ENCODE measurements at regions of chr10 and their contacts with region 1.

Region 1: DNA sequence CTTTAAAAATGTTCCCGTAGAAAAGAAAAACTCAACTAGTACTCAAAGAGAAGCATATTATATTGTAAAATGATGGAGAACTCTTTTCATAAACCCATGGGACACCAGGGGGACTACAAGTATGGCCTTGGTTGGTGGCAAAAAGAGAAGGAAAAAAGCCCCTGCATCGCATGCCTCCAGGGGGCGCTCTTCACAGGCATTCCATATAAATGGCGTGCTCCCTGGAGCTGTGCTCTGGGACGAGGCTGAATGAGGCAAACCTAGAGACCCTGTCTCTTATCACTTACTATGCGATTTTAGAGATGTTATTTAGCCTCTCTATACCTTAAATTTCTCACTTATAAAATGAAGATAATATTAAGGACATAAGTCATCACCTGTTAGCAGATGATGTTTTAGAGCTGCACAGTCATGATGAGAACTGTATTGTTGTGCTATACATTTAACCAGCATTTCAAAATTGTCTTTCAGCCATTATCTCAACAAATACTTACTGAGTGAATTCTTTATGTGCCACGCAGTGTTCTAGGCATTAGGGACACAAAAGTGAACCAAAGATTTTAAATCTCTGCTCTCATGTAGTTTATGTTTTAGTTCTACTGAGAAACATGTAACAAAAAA is 105.8 kb downstream of the ARHGAP21 start:
- DNase-seq: no peak
- H3K4me3 ChIP-seq: no peak overlapping the region
- CTCF ChIP-seq: peak; percentile 67

Region 2: GRCh38 chr10:24556750-24557742 is 60.8 kb before region 1 on chr10:
- CTCF ChIA-PET with region 1: no interaction called
- POLR2A ChIA-PET with region 1: no interaction called
- DNase-seq: peak; percentile 59
- H3K4me3 ChIP-seq: no peak overlapping the region
- CTCF ChIP-seq: peak; percentile 70

Region 3: DNA sequence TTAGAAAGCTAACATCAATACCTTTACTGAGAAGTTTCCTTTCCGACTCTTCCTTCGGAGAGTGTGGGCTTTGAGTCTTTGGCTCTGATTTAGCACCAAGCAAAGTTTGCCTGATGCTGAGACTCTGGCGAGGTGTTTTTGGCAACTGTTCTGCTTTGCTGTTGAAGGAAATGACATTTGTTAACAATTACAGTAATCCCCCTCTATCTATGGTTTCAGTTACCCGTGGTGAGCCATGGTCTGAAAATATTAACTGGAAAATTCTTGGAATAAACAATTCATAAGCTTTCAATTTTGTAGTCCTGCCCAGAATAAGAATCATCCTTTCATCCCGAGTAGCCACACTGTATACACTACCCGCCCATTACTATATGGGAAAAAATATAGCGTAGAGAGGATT is 20.5 kb before region 1 on chr10:
- CTCF ChIA-PET with region 1: interaction called, 12 read pairs
- POLR2A ChIA-PET with region 1: no interaction called
- DNase-seq: no peak
- H3K4me3 ChIP-seq: no peak overlapping the region
- CTCF ChIP-seq: no peak

Region 4: DNA sequence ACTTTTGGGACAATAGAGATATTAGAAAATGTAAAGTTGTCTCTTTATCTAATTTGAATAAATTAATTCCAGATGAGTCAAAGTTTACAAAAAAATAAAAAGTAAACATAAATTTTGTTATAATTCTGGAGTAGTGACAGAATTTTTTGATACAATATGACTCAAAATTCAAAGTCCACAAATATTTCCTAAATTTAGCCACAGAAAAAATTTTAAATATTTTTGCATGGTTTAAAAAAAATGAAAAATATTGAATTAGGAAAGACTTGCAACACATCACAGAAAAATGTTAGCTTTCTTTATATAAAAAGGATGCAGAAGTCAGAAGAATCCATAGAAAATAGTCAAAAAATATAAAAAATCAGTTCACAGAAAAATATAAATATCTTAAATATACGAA is 11.9 kb before region 1 on chr10:
- CTCF ChIA-PET with region 1: interaction called, 29 read pairs
- POLR2A ChIA-PET with region 1: no interaction called
- DNase-seq: no peak
- H3K4me3 ChIP-seq: no peak overlapping the region
- CTCF ChIP-seq: no peak

Region 5: GRCh38 chr10:24642622-24643417 is 24.9 kb after region 1 on chr10:
- CTCF ChIA-PET with region 1: interaction called, 15 read pairs
- POLR2A ChIA-PET with region 1: no interaction called
- DNase-seq: peak; percentile 59
- H3K4me3 ChIP-seq: no peak overlapping the region
- CTCF ChIP-seq: peak; percentile 68

Region 6: GRCh38 chr10:24685958-24686540 is 68.2 kb after region 1 on chr10:
- CTCF ChIA-PET with region 1: interaction called, 10 read pairs
- POLR2A ChIA-PET with region 1: no interaction called
- DNase-seq: no peak
- H3K4me3 ChIP-seq: no peak overlapping the region
- CTCF ChIP-seq: no peak

Region 7: DNA sequence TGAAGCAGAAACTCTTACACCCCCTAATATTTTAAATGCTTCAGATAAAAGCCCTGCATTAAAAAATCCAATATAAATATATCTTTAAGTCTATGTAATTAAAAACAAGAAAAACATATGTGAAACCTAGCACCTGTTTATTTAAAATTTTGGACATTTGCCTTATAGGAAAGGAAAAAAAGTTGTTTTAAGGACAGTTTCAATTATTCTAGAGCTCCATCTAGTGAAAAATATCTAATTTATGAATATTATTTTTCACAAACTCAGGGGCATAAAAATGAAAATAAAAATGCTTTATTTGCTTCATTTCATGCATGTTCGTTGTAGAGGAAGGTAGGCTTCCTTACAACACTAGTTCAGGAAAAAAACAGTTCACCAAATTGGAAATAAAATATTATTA is 372.0 kb after region 1 on chr10:
- CTCF ChIA-PET with region 1: interaction called, 11 read pairs
- POLR2A ChIA-PET with region 1: no interaction called
- DNase-seq: no peak
- H3K4me3 ChIP-seq: no peak overlapping the region
- CTCF ChIP-seq: no peak

Region 8: GRCh38 chr10:25080880-25081581 is 463.1 kb after region 1 on chr10:
- CTCF ChIA-PET with region 1: interaction called, 35 read pairs
- POLR2A ChIA-PET with region 1: no interaction called
- DNase-seq: peak; percentile 54
- H3K4me3 ChIP-seq: no peak overlapping the region; the same call in 1 of the 2 replicates
- CTCF ChIP-seq: peak; percentile 81

Measured in AG04449 (cell line).